A673 (cell line): ENCODE measurements at regions of chr4 and their contacts with region 1.

Region 1: GRCh38 chr4:101155945-101156344 is 191.4 kb downstream of the PPP3CA start:
- DNase-seq: no peak
- H3K4me3 ChIP-seq: no peak overlapping the region
- H3K27ac ChIP-seq: no peak overlapping the region
- H3K4me1 ChIP-seq: peaks cover 57% of the 10 kb centered on the region
- H3K27me3 ChIP-seq: no peaks in the 10 kb centered on the region
- CTCF ChIP-seq: no peak

Region 2: DNA sequence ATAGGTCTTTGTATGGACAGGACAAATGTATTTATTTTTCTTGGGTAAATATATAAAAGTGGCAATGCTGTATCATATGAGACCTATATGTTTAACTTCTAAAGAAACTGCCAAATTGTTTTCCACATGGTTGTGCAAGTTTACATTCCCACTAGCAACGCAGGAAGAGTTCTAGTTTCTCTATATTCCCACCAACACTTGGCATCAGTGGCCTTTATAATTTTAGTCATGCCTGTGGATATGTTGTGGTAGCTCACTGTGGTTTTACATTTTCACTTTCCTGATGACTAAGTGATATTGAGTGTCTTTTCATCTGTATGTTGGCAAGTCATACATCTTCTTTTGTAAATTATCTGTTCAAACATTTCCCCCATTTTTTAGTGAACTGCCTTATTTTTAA is 764.1 kb before region 1 on chr4:
- CTCF ChIA-PET with region 1: interaction called, 17 read pairs
- POLR2A ChIA-PET with region 1: no interaction called
- intact Hi-C with region 1: no loop called
- DNase-seq: no peak
- H3K4me3 ChIP-seq: no peak overlapping the region
- H3K27ac ChIP-seq: no peak overlapping the region
- H3K4me1 ChIP-seq: no peaks in the 10 kb centered on the region
- H3K27me3 ChIP-seq: no peaks in the 10 kb centered on the region
- CTCF ChIP-seq: no peak